ENCODE measurements at regions of chr2 and their contacts with region 1.

Region 1: DNA sequence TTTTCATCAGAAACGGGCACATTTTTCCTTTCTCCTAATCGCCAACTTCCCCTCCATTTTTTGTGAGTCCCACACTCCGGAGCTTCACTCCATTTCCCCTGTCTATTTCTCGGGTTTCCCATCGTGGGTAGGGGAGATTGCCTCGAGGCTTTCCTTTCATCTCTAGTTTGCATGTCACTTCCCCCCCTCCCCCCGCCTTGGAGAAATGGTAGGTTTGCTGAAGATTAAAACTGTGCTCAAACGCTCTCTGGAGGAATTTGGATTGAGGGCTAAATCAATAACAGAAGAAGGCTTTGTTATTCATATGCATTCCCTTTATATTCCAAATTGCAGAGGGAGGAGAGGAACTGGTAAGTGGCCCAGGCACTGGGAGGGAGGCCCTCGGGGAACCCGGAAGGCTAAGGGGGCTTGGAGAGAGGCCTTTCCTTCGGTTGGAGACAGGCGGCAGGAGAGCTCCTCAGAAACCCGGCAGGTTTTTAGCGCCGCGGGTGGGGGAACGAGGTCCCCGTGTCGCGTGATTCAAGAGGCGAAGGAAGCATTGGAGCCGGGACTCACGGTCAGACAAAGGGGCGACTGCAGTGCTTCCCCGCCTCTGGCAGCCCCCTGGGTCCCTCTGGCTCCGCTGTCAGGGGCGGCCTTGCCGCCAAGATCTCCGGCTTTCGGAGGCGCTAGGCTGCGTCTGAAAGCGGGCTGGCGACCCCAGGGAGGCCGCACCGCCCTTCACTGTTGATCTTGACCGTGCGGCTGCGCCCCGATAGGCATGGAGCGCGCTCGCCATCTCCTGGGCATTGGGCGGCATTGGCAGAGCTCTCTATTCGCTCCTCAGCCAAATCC is 2.4 kb upstream of the HOXD12 start:
- DNase-seq: peak; percentile 64
- ATAC-seq: peak; percentile 95
- H3K4me3 ChIP-seq: peak overlapping the region; percentile 47 to 75 (median 61)
- H3K27ac ChIP-seq: no peak overlapping the region
- H3K4me1 ChIP-seq: peaks cover 17% of the 10 kb centered on the region
- H3K27me3 ChIP-seq: peaks cover 28 to 95% of the 10 kb centered on the region in 2 experiments
- CTCF ChIP-seq: peak; percentile 98
- EP300 ChIP-seq: no peak
- POLR2A ChIP-seq: no peak
- RAD21 ChIP-seq: peak; percentile 99

Region 2: GRCh38 chr2:175203621-175204496 is 893.3 kb before region 1 on chr2:
- CTCF ChIA-PET with region 1: no interaction called
- POLR2A ChIA-PET with region 1: no interaction called
- in situ Hi-C with region 1: no loop called
- intact Hi-C with region 1: loop called (anchors 5 kb)
- DNase-seq: peak; percentile 50
- ATAC-seq: peak; percentile 100
- H3K4me3 ChIP-seq: no peak overlapping the region
- H3K27ac ChIP-seq: no peak overlapping the region
- H3K4me1 ChIP-seq: no peaks in the 10 kb centered on the region
- H3K27me3 ChIP-seq: peaks cover 0 to 7% of the 10 kb centered on the region in 2 experiments; a peak in 1 of 5 replicates
- CTCF ChIP-seq: peak; percentile 79
- EP300 ChIP-seq: no peak
- POLR2A ChIP-seq: no peak
- RAD21 ChIP-seq: peak; percentile 62

Region 3: DNA sequence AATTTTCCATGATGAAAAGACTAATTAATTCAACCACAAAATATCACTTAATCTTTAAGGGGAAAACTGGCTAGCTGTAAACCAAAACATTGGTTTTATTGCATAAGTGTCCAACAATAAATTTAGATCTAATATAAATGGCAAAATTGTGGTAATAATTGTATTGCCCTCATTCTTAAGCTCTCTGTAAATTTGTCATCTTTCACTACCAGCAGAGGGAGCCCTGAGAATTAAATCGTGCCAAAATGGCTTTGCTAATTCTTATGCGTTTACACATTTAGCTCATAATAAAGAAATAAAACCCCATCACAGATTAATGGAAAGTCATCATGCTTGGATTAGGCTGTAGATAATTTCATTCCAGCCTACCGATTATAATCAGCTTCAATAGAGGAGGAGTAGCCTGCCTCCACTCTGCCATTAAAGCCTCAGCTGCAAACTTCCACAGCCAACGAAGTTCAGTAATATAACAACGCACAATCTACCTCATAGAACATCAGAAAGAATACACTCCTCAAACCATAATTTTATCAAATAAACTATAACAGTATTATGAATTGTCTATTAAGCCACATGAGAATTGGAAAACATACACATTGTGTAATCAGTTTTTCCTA is 845.7 kb before region 1 on chr2:
- CTCF ChIA-PET with region 1: interaction called, 18 read pairs
- POLR2A ChIA-PET with region 1: no interaction called
- in situ Hi-C with region 1: no loop called
- intact Hi-C with region 1: loop called (anchors 1 kb)
- DNase-seq: peak; percentile 36
- ATAC-seq: no peak; the same call in 2 of the 3 replicates
- H3K4me3 ChIP-seq: no peak overlapping the region
- H3K27ac ChIP-seq: no peak overlapping the region
- H3K4me1 ChIP-seq: no peaks in the 10 kb centered on the region
- H3K27me3 ChIP-seq: no peaks in the 10 kb centered on the region
- CTCF ChIP-seq: peak; percentile 60
- EP300 ChIP-seq: no peak
- POLR2A ChIP-seq: no peak
- RAD21 ChIP-seq: no peak

Region 4: GRCh38 chr2:175309799-175310198 is 787.4 kb before region 1 on chr2:
- CTCF ChIA-PET with region 1: interaction called, 4 read pairs
- POLR2A ChIA-PET with region 1: no interaction called
- in situ Hi-C with region 1: no loop called
- intact Hi-C with region 1: loop called (anchors 1 kb)
- DNase-seq: peak; percentile 27
- ATAC-seq: peak; percentile 86
- H3K4me3 ChIP-seq: no peak overlapping the region
- H3K27ac ChIP-seq: no peak overlapping the region
- H3K4me1 ChIP-seq: no peaks in the 10 kb centered on the region
- H3K27me3 ChIP-seq: 0 out of 5 replicates have a peak, but pooled peaks cover 0 to 3% of the 10 kb centered on the region in 2 experiments
- CTCF ChIP-seq: peak; percentile 71
- EP300 ChIP-seq: no peak
- POLR2A ChIP-seq: no peak
- RAD21 ChIP-seq: no peak; the same call in 1 of the 2 replicates

Region 5: DNA sequence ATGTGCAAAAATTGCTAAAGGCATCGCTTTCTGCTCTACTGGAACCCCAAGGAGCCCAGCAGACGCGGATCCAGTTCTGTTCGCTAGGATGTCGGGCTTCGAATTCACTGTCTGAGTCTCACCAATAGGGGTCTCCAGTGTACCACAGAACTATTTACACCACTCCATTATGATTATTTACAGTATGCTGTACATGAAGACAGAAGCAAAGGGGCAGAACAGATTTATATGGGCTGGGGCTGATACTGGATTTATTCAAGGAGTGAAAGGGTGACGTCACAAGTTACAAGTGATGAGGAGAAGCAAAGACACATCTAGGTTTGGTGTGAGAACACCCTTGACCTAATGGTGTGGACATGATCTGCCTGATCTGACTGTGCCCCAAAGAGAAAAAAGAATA is 730.4 kb before region 1 on chr2:
- CTCF ChIA-PET with region 1: interaction called, 30 read pairs
- POLR2A ChIA-PET with region 1: no interaction called
- in situ Hi-C with region 1: loop called (anchors 5 kb)
- intact Hi-C with region 1: loop called (anchors 1 kb)
- DNase-seq: peak; percentile 53
- ATAC-seq: peak; percentile 97
- H3K4me3 ChIP-seq: no peak overlapping the region
- H3K27ac ChIP-seq: no peak overlapping the region
- H3K4me1 ChIP-seq: no peaks in the 10 kb centered on the region
- H3K27me3 ChIP-seq: peaks cover 0 to 37% of the 10 kb centered on the region in 2 experiments; a peak in 3 of 5 replicates
- CTCF ChIP-seq: peak; percentile 91
- EP300 ChIP-seq: no peak
- POLR2A ChIP-seq: no peak
- RAD21 ChIP-seq: peak; percentile 84

Region 6: DNA sequence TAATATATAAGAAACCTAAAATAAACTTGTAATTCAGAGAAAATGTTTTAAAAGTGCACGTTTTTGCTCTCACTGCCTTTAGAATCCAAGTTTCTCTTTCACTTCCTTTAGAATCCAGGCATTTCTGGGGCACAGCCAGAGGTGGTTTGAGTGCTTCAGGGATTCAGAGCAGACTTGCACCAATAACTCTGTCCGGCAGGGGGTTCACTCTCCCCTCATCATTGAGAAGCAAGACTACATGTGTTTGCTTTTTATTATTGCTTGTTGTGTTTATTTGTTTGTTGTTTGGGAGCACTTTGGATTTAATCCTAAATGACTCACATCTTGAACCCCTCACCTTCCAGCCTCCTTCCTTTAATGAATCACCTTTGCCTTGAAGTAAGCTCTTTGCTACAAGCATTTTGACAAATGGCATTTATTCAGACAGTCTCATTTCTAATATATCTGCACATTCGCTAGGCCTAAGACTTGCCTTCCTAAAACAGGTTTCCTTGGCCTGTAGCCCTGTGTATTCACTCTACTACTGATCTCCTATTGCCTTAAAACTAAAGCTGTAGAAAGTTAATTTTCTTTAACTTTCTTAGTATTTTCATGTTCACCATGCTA is 682.2 kb before region 1 on chr2:
- CTCF ChIA-PET with region 1: interaction called, 13 read pairs
- POLR2A ChIA-PET with region 1: no interaction called
- in situ Hi-C with region 1: no loop called
- intact Hi-C with region 1: loop called (anchors 1 kb)
- DNase-seq: peak; percentile 55
- ATAC-seq: peak; percentile 97
- H3K4me3 ChIP-seq: no peak overlapping the region
- H3K27ac ChIP-seq: no peak overlapping the region
- H3K4me1 ChIP-seq: no peaks in the 10 kb centered on the region
- H3K27me3 ChIP-seq: no peaks in the 10 kb centered on the region; a peak in 1 of 5 replicates
- CTCF ChIP-seq: peak; percentile 84
- EP300 ChIP-seq: no peak
- POLR2A ChIP-seq: no peak
- RAD21 ChIP-seq: 0 out of 2 replicates have a peak, but pooled peaks have one; percentile 44